Activated T-helper 2 cell treated with anti-CD3 and anti-CD28 coated beads, Interferon-gamma antibody, Interleukin-2, Interleukin-4, amounts not matched to agents 10 μg/mL and 5 μg/mL and 100 μg/mL, durations not matched to agents 14 hours and 24 hours and 36 hours (primary cell): ENCODE measurements at regions of chr15 and their contacts with region 1.

Region 1: DNA sequence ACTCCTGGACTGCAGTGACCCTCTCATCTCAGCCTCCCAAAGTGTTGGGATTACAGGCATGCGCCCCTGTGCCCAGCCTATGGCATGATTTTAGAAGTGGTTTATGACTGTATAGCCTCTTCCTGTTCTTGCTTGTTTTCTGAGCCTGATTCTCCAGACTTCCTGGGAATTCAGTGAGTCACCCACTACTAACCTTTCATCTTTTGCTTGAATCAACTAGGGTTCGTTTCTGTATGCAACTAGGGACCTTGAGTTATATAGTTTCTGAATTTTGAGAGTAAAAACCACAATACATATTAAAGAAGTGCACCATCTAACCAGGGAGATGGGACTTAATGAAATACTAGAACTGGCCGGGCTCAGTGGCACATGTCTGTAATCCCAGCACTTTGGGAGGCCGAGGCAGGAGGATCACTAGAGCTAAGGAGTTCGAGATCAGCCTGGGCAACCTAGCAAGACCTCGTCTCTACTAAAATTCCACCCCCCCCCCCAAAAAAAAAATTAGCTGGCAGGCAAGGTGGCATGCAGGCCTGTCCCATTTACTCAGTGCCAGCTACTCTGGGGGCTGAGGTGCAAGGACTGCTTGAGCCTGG is 76.0 kb downstream of the ZNF609 start:
- DNase-seq: no peak
- H3K4me3 Mint-ChIP-seq: peak overlapping the region; percentile 2
- H3K27ac Mint-ChIP-seq: peak overlapping the region; percentile 53
- H3K4me1 Mint-ChIP-seq: peaks cover 43% of the 10 kb centered on the region
- H3K27me3 Mint-ChIP-seq: no peaks in the 10 kb centered on the region

Region 2: GRCh38 chr15:64324165-64324877 is 212.0 kb before region 1 on chr15:
- intact Hi-C with region 1: no loop called
- DNase-seq: no peak
- H3K4me3 Mint-ChIP-seq: no peak overlapping the region
- H3K27ac Mint-ChIP-seq: no peak overlapping the region
- H3K4me1 Mint-ChIP-seq: peaks cover 8% of the 10 kb centered on the region
- H3K27me3 Mint-ChIP-seq: no peaks in the 10 kb centered on the region

Region 3: GRCh38 chr15:64443747-64444621 is 92.4 kb before region 1 on chr15:
- intact Hi-C with region 1: loop called (anchors 5 kb)
- DNase-seq: no peak
- H3K4me3 Mint-ChIP-seq: peak overlapping the region; percentile 77
- H3K27ac Mint-ChIP-seq: peak overlapping the region; percentile 97
- H3K4me1 Mint-ChIP-seq: peaks cover 45% of the 10 kb centered on the region
- H3K27me3 Mint-ChIP-seq: no peaks in the 10 kb centered on the region

Region 4: GRCh38 chr15:64460206-64460734 is 76.1 kb before region 1 on chr15 and contains the start of gene ZNF609:
- intact Hi-C with region 1: loop called (anchors 2 kb)
- DNase-seq: peak; percentile 86
- H3K4me3 Mint-ChIP-seq: peak within 1 kb of the TSS; percentile 87
- H3K27ac Mint-ChIP-seq: peak within 1 kb of the TSS; percentile 82
- H3K4me1 Mint-ChIP-seq: peaks cover 68% of the 10 kb centered on the region
- H3K27me3 Mint-ChIP-seq: no peaks in the 10 kb centered on the region
- total RNA-seq, gene ZNF609: 50.9 and 60.2 TPM in 2 replicates

Region 5: DNA sequence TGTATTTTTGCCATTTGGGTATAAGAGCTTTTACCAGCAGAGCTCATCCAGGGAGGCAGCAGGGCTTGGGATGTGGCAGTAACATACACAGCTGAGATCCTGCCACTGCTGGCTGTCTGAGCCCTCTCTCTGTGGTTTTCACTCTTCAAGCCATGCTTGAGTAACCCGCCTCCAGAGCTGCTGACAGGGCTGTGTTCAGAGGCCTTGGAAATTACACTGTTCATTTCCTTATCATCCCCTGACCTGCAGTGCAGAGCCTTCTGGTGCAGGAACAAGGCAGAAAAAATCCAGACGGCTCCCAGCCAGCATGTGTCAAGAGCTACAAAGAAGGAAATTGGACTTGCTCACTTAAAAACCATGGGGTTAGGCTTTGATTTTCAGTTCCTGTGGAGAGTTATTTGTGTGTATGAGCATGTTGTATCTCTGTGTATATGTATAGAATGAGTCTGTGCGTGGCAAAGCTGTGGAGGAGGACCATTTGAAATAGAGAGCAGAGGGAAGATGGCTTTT is 29.0 kb before region 1 on chr15:
- intact Hi-C with region 1: loop called (anchors 2 kb)
- DNase-seq: no peak
- H3K4me3 Mint-ChIP-seq: no peak overlapping the region
- H3K27ac Mint-ChIP-seq: peak overlapping the region; percentile 66
- H3K4me1 Mint-ChIP-seq: peaks cover 53% of the 10 kb centered on the region
- H3K27me3 Mint-ChIP-seq: no peaks in the 10 kb centered on the region

Region 6: DNA sequence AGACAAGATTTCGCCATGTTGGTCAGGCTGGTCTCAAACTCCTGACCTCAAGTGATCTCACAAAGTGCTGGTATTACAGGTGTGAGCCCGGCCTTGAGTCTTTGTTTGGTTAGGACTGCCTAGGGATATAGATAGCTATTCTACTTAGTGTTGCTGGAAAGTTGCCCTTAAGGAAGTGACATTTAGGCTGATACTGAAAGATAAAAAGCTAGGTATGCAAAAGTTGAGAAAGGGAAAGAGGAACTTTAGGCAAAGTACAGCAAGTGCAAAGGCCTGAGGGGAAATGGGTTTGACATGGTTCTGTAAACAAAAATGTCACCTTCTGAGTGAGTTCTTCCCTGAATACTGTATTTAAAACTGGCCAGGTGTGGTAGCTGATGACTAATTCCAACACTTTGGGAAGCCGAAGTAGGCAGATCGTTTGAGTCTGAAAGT is 35.5 kb after region 1 on chr15:
- intact Hi-C with region 1: loop called (anchors 5 kb)
- DNase-seq: no peak
- H3K4me3 Mint-ChIP-seq: no peak overlapping the region
- H3K27ac Mint-ChIP-seq: peak overlapping the region; percentile 55
- H3K4me1 Mint-ChIP-seq: peaks cover 54% of the 10 kb centered on the region
- H3K27me3 Mint-ChIP-seq: no peaks in the 10 kb centered on the region

Region 7: DNA sequence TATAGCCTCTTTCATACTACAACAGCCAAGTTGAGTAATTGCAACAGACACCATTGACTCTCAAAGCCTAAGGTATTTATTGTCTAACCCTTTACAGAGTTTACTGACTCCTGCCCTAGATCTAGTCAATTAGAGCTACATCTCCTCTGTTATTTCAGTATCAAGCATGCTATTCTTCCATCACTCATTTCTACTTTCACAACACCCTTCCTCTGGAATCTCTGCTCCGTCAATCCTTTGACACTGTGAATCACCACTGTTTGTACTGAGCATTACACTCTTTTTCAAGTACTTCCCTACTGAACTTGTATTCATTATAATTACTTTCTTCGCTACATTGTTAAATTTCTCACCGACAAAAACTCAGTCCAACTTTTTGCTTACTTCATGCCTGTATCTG is 45.9 kb after region 1 on chr15:
- intact Hi-C with region 1: loop called (anchors 5 kb)
- DNase-seq: no peak
- H3K4me3 Mint-ChIP-seq: no peak overlapping the region
- H3K27ac Mint-ChIP-seq: peak overlapping the region; percentile 38
- H3K4me1 Mint-ChIP-seq: peaks cover 33% of the 10 kb centered on the region
- H3K27me3 Mint-ChIP-seq: no peaks in the 10 kb centered on the region

Region 8: DNA sequence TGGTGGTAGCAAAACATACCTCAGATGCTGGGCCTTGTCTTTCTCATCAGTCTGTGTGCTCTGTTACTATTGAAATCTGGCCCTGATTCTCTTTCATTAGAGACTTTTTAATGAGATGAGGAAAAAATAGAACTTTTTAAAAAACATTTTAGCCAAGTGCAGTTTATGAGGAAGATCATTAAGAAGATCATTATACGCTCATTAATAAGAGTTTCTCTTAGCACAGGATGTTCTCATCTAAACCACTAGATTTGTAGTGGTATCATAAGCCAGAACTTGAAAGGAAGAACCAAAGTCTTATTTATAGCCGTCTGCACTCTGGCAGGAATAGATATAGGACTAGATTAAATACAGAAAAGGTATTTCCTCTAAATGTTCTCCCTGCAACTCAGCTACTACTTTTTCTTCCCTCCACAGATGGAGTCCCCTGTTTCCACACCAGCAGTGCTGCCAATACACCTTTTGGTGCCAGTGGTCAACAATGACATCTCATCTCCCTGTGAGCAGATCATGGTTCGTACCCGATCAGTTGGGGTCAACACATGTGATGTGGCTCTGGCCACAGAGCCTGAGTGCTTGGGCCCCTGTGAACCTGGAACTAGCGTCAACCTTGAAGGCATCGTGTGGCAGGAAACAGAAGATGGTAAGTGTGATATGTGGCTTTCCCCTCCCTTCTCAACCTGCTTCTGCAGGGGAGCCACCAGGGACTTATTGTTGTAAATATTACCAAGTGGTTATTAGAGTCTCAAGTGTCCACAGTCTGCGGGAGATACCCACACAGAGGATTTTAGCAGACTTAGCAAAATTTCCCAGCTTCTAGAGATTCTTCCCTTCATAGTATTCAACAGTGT is 86.3 kb after region 1 on chr15:
- intact Hi-C with region 1: loop called (anchors 2 kb)
- DNase-seq: peak; percentile 60
- H3K4me3 Mint-ChIP-seq: peak overlapping the region; percentile 59
- H3K27ac Mint-ChIP-seq: peak overlapping the region; percentile 92
- H3K4me1 Mint-ChIP-seq: peaks cover 74% of the 10 kb centered on the region
- H3K27me3 Mint-ChIP-seq: no peaks in the 10 kb centered on the region